PC-9 (cell line): ENCODE measurements at regions of chr19 and their contacts with region 1.

Region 1: DNA sequence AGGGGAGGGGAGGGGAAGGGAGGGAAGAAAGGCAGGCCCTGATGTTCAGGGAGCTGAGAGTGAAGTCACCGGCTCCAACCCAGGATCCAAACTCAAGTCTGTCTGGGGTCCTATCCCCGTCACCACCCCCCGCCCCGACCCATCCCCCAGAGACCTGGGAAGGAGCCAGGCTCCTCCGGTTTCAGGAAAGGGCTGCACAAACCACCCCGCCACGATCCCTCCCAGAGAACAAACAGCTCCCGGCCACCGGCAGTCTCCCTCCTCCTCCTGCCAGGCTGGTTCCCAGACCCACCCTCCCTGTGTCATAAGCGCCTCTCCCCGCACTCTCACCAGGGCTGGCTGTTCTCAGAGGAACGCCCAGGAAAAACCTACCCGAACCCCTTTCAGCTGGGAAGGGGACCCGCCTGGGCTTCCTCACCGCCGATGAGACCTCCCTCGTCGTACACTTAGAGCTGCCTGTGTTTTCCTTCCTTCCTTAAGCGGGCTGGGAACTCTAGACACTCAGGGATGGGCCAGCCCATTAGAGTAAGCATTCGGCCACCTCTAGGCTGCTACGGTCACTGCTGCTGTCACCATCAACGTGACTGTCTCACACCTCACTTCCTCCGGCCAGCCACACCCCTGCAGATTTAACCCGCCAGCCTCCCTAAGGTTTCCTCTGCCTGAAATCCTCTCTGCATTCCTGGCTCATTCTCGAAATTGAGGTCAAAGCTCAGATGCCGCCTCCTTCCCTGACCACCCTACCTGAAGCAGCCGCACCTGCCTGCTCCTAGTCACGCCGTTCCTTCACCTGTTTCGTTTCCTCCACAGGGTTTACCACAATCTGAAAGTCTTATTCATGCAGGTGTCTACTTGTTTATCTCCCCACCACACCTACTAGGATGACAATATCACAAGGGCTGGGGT is 6.3 kb upstream of the RDH13 start:
- DNase-seq: peak; percentile 90 to 98
- H3K4me3 ChIP-seq: peak overlapping the region; percentile 63
- H3K27ac ChIP-seq: peak overlapping the region; percentile 98
- H3K4me1 ChIP-seq: peaks cover 31% of the 10 kb centered on the region
- H3K27me3 ChIP-seq: no peaks in the 10 kb centered on the region
- CTCF ChIP-seq: no peak; the same call in 1 of the 2 replicates

Region 2: DNA sequence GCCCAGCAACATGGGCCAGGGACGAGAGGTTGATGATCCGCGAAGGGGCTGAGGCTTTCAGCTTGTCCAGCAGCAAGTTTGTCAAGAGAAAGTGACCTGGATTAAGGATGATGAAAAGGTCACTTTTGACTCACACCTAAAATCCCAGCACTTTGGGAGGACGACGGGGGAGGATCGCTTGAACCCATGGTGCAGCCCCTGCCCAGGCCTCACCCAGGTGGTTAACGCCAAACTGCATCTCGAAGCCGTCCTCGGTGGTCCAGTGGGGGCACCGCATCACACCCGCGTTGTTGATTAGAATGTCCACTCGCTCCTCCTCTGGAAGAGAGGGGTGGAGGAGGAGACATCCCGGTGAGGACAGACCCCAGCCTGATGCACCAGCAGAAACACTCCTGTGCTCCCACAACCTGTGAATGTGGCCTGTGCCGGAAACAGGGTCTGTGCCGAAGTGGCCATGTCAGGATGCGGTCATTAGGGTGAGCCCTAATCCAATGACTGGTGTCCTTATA is 20.7 kb before region 1 on chr19:
- CTCF ChIA-PET with region 1: interaction called, 10 read pairs
- POLR2A ChIA-PET with region 1: interaction called, 8 read pairs
- intact Hi-C with region 1: no loop called
- DNase-seq: no peak
- H3K4me3 ChIP-seq: no peak overlapping the region
- H3K27ac ChIP-seq: no peak overlapping the region
- H3K4me1 ChIP-seq: no peaks in the 10 kb centered on the region
- H3K27me3 ChIP-seq: no peaks in the 10 kb centered on the region
- CTCF ChIP-seq: no peak

Region 3: DNA sequence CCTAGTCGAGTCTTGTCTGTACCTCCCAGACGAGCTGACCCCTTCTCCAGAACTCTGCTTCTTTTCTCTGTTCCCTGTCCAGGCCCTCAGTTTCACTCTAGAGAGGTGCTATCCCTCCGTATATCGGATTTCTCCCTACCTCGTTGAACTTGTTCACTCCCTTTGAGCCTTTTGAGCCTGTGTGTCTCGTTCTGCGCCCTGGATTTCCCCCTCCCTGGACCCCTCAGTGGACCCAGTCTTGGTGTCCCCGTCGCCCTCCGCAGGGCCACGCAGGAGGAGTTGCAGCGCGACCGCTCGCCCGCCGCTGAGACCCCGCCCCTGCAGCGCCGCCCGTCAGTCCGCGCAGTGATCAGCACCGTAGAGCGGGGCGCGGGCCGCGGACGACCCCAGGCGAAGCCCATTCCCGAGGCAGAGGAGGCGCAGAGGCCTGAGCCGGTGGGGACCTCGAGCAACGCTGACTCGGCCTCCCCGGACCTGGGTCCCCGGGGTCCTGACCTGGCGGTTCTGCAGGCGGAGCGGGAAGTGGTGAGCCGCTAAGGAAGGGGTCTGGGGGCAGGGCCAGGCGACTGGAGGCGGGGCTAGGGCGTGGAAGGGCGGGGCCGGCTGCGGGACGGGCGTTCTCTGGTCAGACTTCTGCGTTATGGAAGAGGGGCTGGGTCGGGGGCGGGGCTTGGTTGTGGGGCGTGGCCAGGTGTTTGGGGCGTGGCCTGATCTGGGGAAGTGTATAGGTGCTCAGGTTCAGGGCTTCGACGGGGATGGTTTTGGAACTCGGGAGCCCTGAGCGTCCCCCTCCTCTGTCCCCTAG is 12.0 kb after region 1 on chr19:
- CTCF ChIA-PET with region 1: no interaction called
- POLR2A ChIA-PET with region 1: interaction called, 19 read pairs
- intact Hi-C with region 1: no loop called
- DNase-seq: no peak
- H3K4me3 ChIP-seq: no peak overlapping the region
- H3K27ac ChIP-seq: no peak overlapping the region
- H3K4me1 ChIP-seq: peaks cover 9% of the 10 kb centered on the region
- H3K27me3 ChIP-seq: no peaks in the 10 kb centered on the region
- CTCF ChIP-seq: no peak

Region 4: GRCh38 chr19:55305483-55305882 is 236.3 kb after region 1 on chr19:
- CTCF ChIA-PET with region 1: no interaction called
- POLR2A ChIA-PET with region 1: no interaction called
- intact Hi-C with region 1: no loop called
- DNase-seq: peak in 1 of 2 experiments; percentile 35
- H3K4me3 ChIP-seq: no peak overlapping the region
- H3K27ac ChIP-seq: no peak overlapping the region
- H3K4me1 ChIP-seq: 0 out of 2 replicates have a peak, but pooled peaks cover 4% of the 10 kb centered on the region
- H3K27me3 ChIP-seq: no peaks in the 10 kb centered on the region
- CTCF ChIP-seq: no peak